GM12878 (cell line): ENCODE measurements at regions of chr6 and their contacts with region 1.

Region 1: DNA sequence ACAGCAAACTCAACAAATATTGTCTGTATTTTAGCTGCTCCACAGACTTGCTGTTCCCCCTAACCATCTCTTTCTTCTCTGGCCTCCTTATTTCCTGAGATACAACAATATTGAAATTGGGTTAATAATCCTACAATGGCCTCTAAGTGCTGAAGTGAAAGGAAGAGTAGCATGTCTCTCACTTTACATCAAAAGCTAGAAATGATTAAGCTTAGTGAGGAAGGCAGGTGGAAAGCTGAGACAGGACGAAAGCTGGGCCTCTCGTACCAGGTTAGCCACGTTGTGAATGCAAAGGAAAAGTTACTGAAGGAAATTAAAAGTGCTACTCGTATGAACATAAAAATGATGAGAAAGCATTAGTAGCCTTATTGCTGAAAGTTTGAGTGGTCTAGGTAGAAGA is 63.8 kb downstream of the ELOVL5 start:
- DNase-seq: no peak
- ATAC-seq: peak; percentile 76
- H3K4me3 ChIP-seq: no peak overlapping the region
- H3K27ac ChIP-seq: no peak overlapping the region
- H3K4me1 ChIP-seq: peaks cover 28% of the 10 kb centered on the region
- H3K27me3 ChIP-seq: no peaks in the 10 kb centered on the region
- CTCF ChIP-seq: no peak
- EP300 ChIP-seq: peak in 1 of 2 experiments; percentile 33; a peak in 1 of 4 replicates
- POLR2A ChIP-seq: no peak
- RAD21 ChIP-seq: no peak

Region 2: DNA sequence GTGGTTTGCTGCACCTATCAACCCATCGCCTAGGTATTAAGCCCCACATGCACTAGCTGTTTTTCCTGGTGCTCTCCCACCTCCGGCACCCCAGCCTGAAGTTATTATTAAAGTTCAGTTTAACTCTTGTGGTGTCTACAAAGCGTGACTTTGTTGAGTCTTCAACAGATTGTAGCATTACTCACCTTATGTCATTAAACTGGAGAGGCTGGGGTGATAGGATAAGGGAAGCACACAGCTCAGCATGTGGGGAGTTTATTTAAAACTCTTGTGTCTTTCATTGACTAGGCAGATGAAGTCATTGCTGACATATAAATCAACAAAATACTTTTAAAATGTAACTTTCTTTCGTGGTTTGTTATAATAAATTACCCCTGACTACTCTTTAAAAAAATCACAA is 51.6 kb before region 1 on chr6:
- CTCF ChIA-PET with region 1: interaction called, 7 read pairs
- POLR2A ChIA-PET with region 1: interaction called, 7 read pairs
- RAD21 ChIA-PET with region 1: interaction called, 3 read pairs
- SMC1A ChIA-PET with region 1: interaction called, 22 read pairs
- in situ Hi-C with region 1: no loop called
- intact Hi-C with region 1: no loop called
- DNase-seq: no peak
- ATAC-seq: no peak
- H3K4me3 ChIP-seq: no peak overlapping the region
- H3K27ac ChIP-seq: no peak overlapping the region
- H3K4me1 ChIP-seq: peaks cover 26% of the 10 kb centered on the region
- H3K27me3 ChIP-seq: no peaks in the 10 kb centered on the region
- CTCF ChIP-seq: no peak
- EP300 ChIP-seq: no peak
- POLR2A ChIP-seq: no peak
- RAD21 ChIP-seq: no peak

Region 3: GRCh38 chr6:53300656-53301551 is 16.0 kb after region 1 on chr6:
- CTCF ChIA-PET with region 1: interaction called, 29 read pairs
- POLR2A ChIA-PET with region 1: interaction called, 5 read pairs
- RAD21 ChIA-PET with region 1: interaction called, 11 read pairs
- SMC1A ChIA-PET with region 1: interaction called, 25 read pairs
- in situ Hi-C with region 1: no loop called
- intact Hi-C with region 1: no loop called
- DNase-seq: no peak
- ATAC-seq: peak; percentile 47
- H3K4me3 ChIP-seq: no peak overlapping the region
- H3K27ac ChIP-seq: no peak overlapping the region
- H3K4me1 ChIP-seq: peaks cover 4% of the 10 kb centered on the region
- H3K27me3 ChIP-seq: no peaks in the 10 kb centered on the region
- CTCF ChIP-seq: no peak
- EP300 ChIP-seq: no peak
- POLR2A ChIP-seq: no peak
- RAD21 ChIP-seq: no peak

Region 4: DNA sequence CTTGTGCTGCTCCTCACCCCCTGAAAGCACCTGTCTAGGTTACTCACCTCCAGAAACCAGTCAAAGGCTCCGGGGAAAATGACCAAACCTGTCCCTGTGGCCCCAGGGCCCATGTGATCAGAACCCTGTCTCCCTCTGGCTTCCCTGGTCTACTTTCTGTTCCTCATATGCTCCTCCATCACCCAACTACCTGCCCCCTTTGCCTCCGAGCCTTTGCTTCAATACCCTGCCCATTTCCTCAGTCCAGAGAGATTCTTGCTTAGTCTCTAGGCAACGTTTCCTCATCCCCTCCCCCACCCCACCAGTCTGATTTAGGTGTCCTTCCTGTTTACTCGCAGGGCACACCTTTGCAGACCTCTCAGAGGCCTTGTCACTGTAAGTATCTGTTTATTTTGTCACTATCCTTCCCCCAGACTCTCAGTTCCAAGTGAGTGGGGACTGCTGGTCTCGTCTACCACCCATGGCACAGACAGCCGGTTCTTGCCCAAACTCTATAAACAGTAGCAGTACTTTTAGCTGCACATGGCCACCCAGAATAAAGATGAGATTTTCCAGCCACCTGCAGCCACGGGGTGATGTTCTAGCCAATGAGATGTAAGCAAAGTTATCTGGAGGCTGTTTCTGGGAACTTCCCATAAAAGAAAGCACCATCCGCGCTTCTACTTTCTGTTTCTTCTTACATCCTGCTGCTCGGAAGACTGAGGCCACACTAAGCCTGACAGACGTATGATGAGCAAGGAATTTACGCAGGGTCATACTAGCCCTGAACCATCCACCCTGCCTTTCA is 50.5 kb after region 1 on chr6:
- CTCF ChIA-PET with region 1: interaction called, 3 read pairs
- POLR2A ChIA-PET with region 1: interaction called, 5 read pairs
- RAD21 ChIA-PET with region 1: interaction called, 22 read pairs
- SMC1A ChIA-PET with region 1: interaction called, 27 read pairs
- in situ Hi-C with region 1: no loop called
- intact Hi-C with region 1: no loop called
- DNase-seq: peak; percentile 88
- ATAC-seq: peak; percentile 90
- H3K4me3 ChIP-seq: peak overlapping the region; percentile 72
- H3K27ac ChIP-seq: peak overlapping the region; percentile 85
- H3K4me1 ChIP-seq: peaks cover 22% of the 10 kb centered on the region
- H3K27me3 ChIP-seq: no peaks in the 10 kb centered on the region
- CTCF ChIP-seq: no peak
- EP300 ChIP-seq: peak in 1 of 2 experiments; percentile 68; a peak in 2 of 4 replicates
- POLR2A ChIP-seq: peak; percentile 34; the same call in 1 of the 2 replicates
- RAD21 ChIP-seq: no peak

Region 5: GRCh38 chr6:53348371-53349208 is 63.7 kb after region 1 on chr6 and contains the start of gene ELOVL5:
- CTCF ChIA-PET with region 1: interaction called, 4 read pairs
- POLR2A ChIA-PET with region 1: interaction called, 8 read pairs
- RAD21 ChIA-PET with region 1: interaction called, 14 read pairs
- SMC1A ChIA-PET with region 1: interaction called, 10 read pairs
- in situ Hi-C with region 1: no loop called
- intact Hi-C with region 1: loop called (anchors 2 kb)
- DNase-seq: peak; percentile 73
- ATAC-seq: peak; percentile 80
- H3K4me3 ChIP-seq: peak within 1 kb of the TSS; percentile 92
- H3K27ac ChIP-seq: peak within 1 kb of the TSS; percentile 85
- H3K4me1 ChIP-seq: peaks cover 11% of the 10 kb centered on the region
- H3K27me3 ChIP-seq: no peaks in the 10 kb centered on the region; a peak in 1 of 4 replicates
- CTCF ChIP-seq: no peak
- EP300 ChIP-seq: no peak
- POLR2A ChIP-seq: peak; percentile 81
- RAD21 ChIP-seq: no peak
- polyA plus RNA-seq, gene ELOVL5: 187 to 195 TPM